GM23248 (cell line): ENCODE measurements at regions of chr14 and their contacts with region 1.

Region 1: DNA sequence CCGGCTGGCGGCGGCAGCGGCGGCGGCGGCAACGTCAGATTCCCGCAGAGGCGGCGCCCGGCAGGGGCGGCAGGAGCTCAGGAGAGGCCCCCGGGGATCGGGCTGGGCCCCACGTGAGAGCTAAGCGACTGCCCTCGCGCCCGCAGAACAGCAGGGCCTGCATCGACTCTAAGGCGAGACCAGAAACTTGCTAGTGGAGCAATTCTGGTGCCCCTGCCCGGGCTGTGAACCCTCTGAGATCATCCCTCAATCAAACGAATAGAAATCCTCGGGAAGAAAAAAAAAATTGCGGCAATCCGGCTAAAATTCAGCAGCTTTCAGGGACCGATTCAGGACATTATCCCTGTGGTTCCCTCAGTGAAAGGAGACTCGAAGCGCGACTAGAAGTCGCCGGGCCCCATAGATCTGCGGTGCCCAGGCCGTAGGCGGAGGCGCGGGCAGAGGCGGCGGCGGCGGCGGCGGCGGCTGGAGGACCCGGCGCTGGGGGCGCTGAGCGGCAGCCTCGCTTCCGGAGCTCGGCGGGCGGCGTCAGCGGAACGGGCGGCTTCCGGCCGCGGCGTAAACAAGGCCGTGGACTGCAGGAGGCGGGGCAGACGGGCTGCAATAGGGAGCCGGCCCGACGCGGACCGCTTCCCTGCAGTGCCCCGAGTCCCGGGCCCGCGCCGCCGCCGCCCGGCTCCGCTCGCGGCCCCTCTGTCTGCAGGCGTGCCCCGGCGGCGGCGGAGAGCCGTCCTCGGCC is at the start of gene KLHDC2:
- DNase-seq: peak; percentile 96
- H3K4me3 ChIP-seq: peak within 1 kb of the TSS; percentile 83
- H3K27ac ChIP-seq: peak within 1 kb of the TSS; percentile 98
- H3K4me1 ChIP-seq: peaks cover 25% of the 10 kb centered on the region
- H3K27me3 ChIP-seq: no peaks in the 10 kb centered on the region
- total RNA-seq, gene KLHDC2: 73.9 and 82.8 TPM in 2 replicates

Region 2: DNA sequence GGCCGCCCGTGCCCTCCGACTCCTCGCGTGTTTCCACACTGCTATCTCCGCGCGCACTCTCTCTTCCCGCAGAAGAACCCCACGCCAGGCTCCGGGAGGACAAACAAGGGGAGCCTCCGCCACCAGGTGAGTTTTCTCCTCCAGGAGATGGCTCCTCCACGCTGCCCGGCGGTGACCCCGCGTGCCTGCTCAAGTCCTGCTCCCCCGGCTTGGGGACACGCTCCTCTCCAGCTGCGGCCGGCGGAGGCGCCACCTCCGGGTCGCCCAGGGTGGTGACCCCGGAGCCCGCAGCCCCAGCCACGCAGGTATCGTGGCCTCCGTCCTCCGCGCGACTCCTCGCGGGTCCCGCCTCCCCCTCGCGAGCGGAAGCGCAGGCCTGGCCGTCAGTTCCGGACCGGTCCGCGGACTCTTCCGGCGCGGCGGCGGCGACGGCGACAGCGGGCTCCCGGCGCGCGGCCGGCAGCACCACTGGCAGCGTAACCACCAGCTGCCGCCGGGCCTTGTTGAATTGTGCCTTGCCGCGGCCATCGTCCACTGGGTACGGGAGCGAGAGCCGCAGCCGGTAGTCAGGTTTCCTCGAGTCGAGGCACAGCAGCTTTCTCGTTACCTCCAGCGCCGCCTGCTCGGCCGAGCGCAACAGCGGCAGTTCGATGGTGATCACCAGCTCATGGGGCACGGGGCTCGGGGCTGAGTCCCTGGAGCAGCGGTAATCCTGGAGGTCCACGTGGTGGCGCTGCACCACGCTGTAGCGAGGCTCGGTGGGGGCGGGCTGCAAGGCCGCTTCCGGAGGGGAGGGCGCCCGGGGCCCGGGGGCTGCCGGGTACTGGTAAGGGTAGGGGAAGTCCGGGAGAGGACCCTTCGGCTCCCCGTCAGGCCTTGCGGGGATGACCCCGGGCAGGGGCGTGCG is 133.8 kb before region 1 on chr14:
- in situ Hi-C with region 1: loop called (anchors 10 kb)
- DNase-seq: peak; percentile 98
- H3K4me3 ChIP-seq: peak overlapping the region; percentile 83
- H3K27ac ChIP-seq: peak overlapping the region; percentile 90
- H3K4me1 ChIP-seq: peaks cover 21% of the 10 kb centered on the region
- H3K27me3 ChIP-seq: no peaks in the 10 kb centered on the region